Activated CD8-positive, alpha-beta memory T cell treated with anti-CD3 and anti-CD28 coated beads, Interleukin-2, amount 10 ng/mL, durations not matched to agents 7 days and 5 days (primary cell): ENCODE measurements at regions of chr17 and their contacts with region 1.

Region 1: GRCh38 chr17:63419949-63420867 is 25.9 kb downstream of the CYB561 start:
- DNase-seq: peak; percentile 85
- ATAC-seq: peak; percentile 87
- H3K4me3 Mint-ChIP-seq: peak overlapping the region; percentile 8
- H3K27ac Mint-ChIP-seq: peak overlapping the region; percentile 77
- H3K4me1 Mint-ChIP-seq: peaks cover 23% of the 10 kb centered on the region
- H3K27me3 Mint-ChIP-seq: no peaks in the 10 kb centered on the region

Region 2: DNA sequence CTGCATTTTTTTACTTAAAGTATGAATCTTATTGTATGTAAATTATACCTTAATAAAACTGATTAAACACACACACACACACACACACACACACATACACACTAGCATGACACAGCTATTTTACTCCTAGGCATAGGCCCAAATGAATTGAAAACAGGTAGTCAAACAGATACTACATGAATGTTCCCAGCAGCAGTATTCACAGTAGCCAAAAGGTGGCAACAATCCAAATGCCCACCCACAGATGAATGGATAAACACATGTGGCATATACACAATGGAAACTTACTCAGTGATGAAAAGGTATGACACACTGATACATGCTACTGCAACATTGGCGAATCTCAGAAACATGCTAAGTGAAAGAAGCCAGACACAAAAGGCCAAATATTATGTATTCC is 197.6 kb before region 1 on chr17:
- CTCF ChIA-PET with region 1: no interaction called
- DNase-seq: no peak
- ATAC-seq: no peak
- H3K4me3 Mint-ChIP-seq: no peak overlapping the region
- H3K27ac Mint-ChIP-seq: no peak overlapping the region
- H3K4me1 Mint-ChIP-seq: no peaks in the 10 kb centered on the region
- H3K27me3 Mint-ChIP-seq: no peaks in the 10 kb centered on the region

Region 3: GRCh38 chr17:63395075-63395805 is 25.0 kb before region 1 on chr17:
- CTCF ChIA-PET with region 1: no interaction called
- DNase-seq: no peak
- ATAC-seq: no peak
- H3K4me3 Mint-ChIP-seq: no peak overlapping the region
- H3K27ac Mint-ChIP-seq: no peak overlapping the region
- H3K4me1 Mint-ChIP-seq: peaks cover 15% of the 10 kb centered on the region
- H3K27me3 Mint-ChIP-seq: no peaks in the 10 kb centered on the region

Region 4: GRCh38 chr17:63434876-63435684 is 14.9 kb after region 1 on chr17:
- CTCF ChIA-PET with region 1: interaction called, 185 read pairs
- DNase-seq: peak; percentile 91
- ATAC-seq: peak; percentile 93
- H3K4me3 Mint-ChIP-seq: peak overlapping the region; percentile 56
- H3K27ac Mint-ChIP-seq: peak overlapping the region; percentile 97
- H3K4me1 Mint-ChIP-seq: peaks cover 62% of the 10 kb centered on the region
- H3K27me3 Mint-ChIP-seq: no peaks in the 10 kb centered on the region